BJ (cell line): ENCODE measurements at regions of chr2 and their contacts with region 1.

Region 1: DNA sequence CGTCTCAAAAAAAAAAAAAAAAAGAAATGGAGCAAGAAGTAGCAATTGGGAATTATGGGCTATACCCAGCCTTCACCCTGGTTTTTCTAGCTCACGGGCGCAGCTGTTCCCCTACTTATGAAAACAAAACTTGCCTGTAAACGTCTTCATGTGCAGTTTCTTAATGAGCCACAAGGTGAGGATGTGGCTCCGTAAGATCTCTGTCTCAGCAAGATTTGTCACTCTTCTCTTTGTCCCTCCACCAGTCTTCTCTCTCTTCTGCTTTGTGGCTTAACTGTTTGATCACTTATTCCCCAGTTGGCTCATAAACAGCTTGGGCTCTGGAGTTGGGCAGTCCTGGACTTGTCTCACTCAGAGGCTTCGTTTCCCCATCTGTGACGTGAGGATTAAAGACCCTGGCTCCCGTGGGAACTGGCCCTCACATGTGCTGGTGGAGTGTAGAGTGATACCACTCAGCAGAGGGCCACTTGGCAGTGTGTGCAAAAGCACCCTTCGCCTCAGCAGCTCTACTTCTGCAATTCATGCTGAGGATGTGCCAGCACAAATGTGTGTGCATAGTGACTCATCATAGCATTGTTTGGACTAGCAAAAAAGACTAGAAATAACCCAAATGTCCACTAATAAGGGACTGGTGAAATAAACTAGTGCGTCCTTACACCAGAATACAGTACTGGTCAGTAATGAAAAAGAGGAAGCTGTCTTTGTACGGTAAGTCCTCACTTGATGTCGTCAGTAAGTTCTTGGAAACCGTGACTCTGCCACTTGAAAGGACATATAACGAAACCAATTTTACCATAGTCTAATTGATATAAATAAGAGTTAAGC is 8.7 kb downstream of the CEP68 start:
- DNase-seq: peak; percentile 50
- H3K4me3 ChIP-seq: no peak overlapping the region; the same call in 1 of the 2 replicates
- H3K27me3 ChIP-seq: no peaks in the 10 kb centered on the region
- CTCF ChIP-seq: peak; percentile 62

Region 2: GRCh38 chr2:65169760-65170136 is 104.8 kb after region 1 on chr2:
- CTCF ChIA-PET with region 1: interaction called, 15 read pairs
- POLR2A ChIA-PET with region 1: no interaction called
- DNase-seq: no peak
- H3K4me3 ChIP-seq: no peak overlapping the region
- H3K27me3 ChIP-seq: no peaks in the 10 kb centered on the region
- CTCF ChIP-seq: no peak